Sigmoid colon (tissue), 7 donors: ENCODE measurements at regions of chrX and their contacts with region 1.

Region 1: GRCh38 chrX:102720237-102721168 is at the start of gene GPRASP3:
- DNase-seq: peak; percentile 90
- H3K4me3 ChIP-seq: peak within 1 kb of the TSS; percentile 33 to 55 (median 50)
- H3K27ac ChIP-seq: peak within 1 kb of the TSS; percentile 57 to 75 (median 68)
- H3K4me1 ChIP-seq: peaks cover 0 to 8% (median 3%) of the 10 kb centered on the region in 4 donors
- H3K27me3 ChIP-seq: no peaks in the 10 kb centered on the region
- CTCF ChIP-seq: no peak
- EP300 ChIP-seq: no peak
- POLR2A ChIP-seq: no peak
- total RNA-seq, gene GPRASP3: 4.5 to 8.6 (median 7.2) TPM

Region 2: DNA sequence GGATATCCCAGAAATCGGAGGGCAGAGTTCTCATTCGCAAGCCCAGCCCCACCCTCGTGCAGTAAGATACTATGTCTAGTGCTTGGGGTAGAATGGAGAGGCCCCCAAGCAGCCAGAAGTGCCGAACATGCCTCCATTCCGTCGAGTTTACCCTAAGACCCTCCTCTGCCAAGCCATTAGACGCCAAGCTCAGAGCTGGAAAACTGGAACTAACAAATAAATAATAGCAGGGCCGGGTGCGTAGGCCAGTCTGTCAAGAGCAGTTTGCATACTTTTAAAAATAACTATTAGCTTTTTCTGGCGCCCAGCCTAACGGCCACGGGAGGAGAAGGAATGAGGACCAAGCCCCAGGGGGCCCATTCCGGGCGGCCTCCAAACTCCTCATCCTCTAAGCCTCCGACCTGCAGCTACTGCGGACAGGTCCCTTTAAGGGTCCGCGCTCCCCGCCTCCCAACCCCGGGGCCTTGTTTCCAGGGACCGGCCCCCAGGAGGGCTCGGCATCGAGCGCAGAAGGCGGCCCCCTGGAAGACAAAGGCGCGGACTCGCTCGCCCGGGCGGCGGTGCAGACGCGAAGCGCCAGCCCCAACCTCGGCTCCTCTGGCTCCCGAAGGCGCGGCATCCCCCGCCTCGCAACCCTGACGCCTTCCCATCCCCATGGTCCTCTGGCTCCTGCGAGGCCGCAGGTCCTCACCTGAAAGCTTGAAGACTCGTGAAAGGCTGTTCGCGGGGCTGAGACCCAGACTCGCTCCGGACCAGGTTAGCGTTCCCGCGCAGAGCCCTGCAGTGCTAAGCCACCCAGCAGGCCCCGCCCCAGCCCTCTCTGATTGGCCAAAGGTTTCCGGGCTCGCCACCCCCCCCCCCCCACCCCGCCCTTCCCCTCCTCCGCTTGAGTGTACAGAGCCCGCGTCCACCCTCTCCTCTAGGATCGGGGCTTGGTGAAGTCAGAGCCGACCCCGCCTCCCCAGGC is 204.2 kb before region 1 on chrX and contains the start of gene TMSB15A:
- intact Hi-C with region 1: loop called (anchors 10 kb)
- DNase-seq: peak; percentile 79
- H3K4me3 ChIP-seq: peak within 1 kb of the TSS; percentile 15 to 52 (median 45)
- H3K27ac ChIP-seq: peak within 1 kb of the TSS in 2 of 4 donors; percentile 31 to 49
- H3K4me1 ChIP-seq: peaks cover 0 to 9% (median 3%) of the 10 kb centered on the region in 4 donors
- H3K27me3 ChIP-seq: peaks cover 0 to 4% (median 0%) of the 10 kb centered on the region in 3 donors
- CTCF ChIP-seq: no peak
- EP300 ChIP-seq: no peak
- POLR2A ChIP-seq: no peak
- total RNA-seq, gene TMSB15A: 0.99 to 3.6 TPM in 2 of 4 donors, not detected in the others

Region 3: GRCh38 chrX:102580891-102581290 is 139.6 kb before region 1 on chrX:
- intact Hi-C with region 1: no loop called
- DNase-seq: no peak
- H3K4me3 ChIP-seq: no peak overlapping the region
- H3K27ac ChIP-seq: no peak overlapping the region
- H3K4me1 ChIP-seq: no peaks in the 10 kb centered on the region
- H3K27me3 ChIP-seq: no peaks in the 10 kb centered on the region
- CTCF ChIP-seq: no peak
- EP300 ChIP-seq: no peak
- POLR2A ChIP-seq: no peak